GM10248 (cell line): ENCODE measurements at regions of chr1 and their contacts with region 1.

Region 1: GRCh38 chr1:151739590-151740375 is 18.5 kb downstream of the RIIAD1 start:
- DNase-seq: no peak
- CTCF ChIP-seq: no peak

Region 2: GRCh38 chr1:151680812-151681211 is 59.0 kb before region 1 on chr1:
- CTCF ChIA-PET with region 1: no interaction called
- POLR2A ChIA-PET with region 1: no interaction called
- DNase-seq: no peak
- CTCF ChIP-seq: no peak

Region 3: DNA sequence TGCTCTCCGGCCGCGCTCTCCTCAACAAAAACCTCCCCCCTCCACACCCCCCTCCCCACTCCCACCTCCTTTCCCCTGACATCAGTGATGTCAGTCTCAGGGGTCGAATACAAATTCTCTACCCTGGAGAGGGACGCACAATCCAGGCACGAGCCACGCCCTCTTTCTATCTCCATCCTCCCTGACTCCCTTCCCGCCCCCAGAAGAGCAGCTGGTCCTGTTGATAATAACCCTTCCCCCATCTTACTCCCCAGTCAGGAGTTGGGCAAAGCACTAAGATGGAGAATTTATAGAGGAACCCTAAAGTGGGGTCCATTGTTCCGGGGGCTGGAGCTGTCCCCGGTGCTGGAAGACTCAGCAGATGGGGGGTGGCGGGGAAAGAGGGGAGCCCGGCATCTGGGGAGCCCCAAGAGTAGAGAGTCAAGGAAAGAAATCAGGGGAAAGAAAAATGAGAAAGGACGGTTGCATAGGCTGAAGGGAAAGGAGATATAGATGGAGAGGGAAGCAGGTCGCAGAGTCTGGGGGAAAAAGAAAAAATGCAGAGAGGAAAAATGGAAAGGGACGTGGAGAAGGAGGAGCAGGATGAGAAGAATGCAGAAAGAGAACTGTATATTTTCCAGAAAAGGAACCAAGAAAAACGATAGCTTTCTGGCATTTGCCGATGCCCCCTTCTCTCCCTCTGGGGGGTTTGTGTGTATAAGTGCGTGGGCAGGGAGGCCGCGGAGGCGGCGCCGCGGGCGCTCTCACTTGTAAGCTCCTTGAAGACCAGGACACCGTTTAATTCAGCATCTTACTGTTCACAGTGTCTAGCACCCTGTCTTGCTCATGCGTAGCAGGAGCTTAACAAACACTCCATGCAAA is 22.8 kb before region 1 on chr1 and contains the start of gene CELF3:
- CTCF ChIA-PET with region 1: interaction called, 10 read pairs
- POLR2A ChIA-PET with region 1: no interaction called
- DNase-seq: no peak
- CTCF ChIP-seq: no peak

Region 4: DNA sequence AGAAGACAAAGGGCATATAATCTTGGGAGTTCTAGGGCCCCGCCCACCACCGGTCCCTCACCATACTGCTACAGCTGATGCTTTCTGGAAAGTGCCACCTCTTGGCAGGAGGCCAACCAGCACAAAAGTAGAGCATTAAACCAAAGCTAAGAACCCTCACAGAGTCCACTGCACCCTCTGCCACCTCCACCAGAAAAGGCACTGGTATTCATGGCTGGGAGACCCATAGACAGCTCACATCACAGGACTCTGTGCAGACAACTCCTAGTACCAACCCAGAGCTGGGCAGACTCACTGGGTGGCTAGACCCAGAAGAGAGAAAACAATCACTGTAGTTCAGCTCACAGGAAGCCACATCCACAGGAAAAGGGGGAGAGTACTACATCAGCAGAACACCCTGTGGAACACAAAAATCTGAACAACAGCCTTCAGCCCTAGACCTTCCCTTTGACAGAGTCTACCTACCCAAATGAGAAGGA is 158.8 kb after region 1 on chr1:
- CTCF ChIA-PET with region 1: no interaction called
- POLR2A ChIA-PET with region 1: no interaction called
- DNase-seq: no peak
- CTCF ChIP-seq: no peak